CD14-positive monocyte (primary cell): ENCODE measurements at regions of chr17 and their contacts with region 1.

Region 1: GRCh38 chr17:8409966-8410864 is 12.6 kb upstream of the RNF222 start:
- DNase-seq: peak; percentile 73 to 86 (median 83)
- H3K4me3 ChIP-seq: peak overlapping the region in 1 of 3 experiments; percentile 27
- H3K4me3 Mint-ChIP-seq: peak overlapping the region; percentile 69 to 71
- H3K27ac ChIP-seq: peak overlapping the region in 1 of 2 donors; percentile 4
- H3K27ac Mint-ChIP-seq: peak overlapping the region; percentile 58 to 91 (median 80)
- H3K4me1 ChIP-seq: peaks cover 34 to 52% of the 10 kb centered on the region in 2 donors
- H3K4me1 Mint-ChIP-seq: peaks cover 46% of the 10 kb centered on the region
- H3K27me3 ChIP-seq: no peaks in the 10 kb centered on the region
- H3K27me3 Mint-ChIP-seq: peaks cover 0 to 9% (median 8%) of the 10 kb centered on the region in 3 donors
- CTCF ChIP-seq: peak; percentile 93

Region 2: DNA sequence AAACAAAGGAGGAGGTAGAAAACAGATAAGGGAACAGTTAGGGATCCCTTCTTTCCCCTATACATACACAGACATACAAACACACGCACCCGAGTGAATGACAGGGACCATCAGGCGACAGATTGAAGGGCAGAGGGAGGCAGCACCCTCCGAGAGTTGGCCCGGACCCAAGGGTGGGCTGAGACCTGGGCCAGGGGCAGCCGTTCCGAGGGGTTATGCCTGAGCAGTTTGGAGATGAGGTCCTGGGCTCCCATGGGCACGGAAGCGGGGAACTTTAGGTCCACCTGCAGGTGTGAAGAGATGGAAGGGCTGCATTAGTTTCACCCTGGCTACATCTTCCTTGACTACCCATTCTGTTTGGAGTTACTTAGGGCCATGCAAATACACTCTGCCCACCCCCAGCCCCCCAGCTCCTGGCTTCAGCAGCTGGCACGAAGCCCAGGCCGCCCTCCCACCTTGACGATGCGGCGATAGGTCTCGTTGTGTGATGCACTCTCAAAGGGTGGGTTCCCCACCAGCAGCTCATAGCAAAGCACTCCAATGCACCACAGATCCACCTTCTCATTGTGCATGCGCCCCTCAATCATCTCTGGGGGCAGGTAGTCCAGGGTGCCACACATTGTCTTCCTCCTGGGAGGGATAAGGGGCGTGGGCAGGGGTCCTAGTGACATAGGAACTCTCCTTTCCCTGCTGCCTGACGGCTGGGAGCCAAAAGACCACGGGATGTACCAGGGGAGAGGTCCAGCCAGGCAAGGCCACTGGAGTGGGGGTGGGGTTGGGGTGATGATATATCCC is 205.3 kb before region 1 on chr17:
- intact Hi-C with region 1: no loop called
- DNase-seq: no peak
- H3K4me3 ChIP-seq: no peak overlapping the region
- H3K4me3 Mint-ChIP-seq: no peak overlapping the region
- H3K27ac ChIP-seq: no peak overlapping the region
- H3K27ac Mint-ChIP-seq: peak overlapping the region in 1 of 7 donors; percentile 70
- H3K4me1 ChIP-seq: peaks cover 18 to 22% of the 10 kb centered on the region in 2 donors
- H3K4me1 Mint-ChIP-seq: peaks cover 18% of the 10 kb centered on the region
- H3K27me3 ChIP-seq: no peaks in the 10 kb centered on the region
- H3K27me3 Mint-ChIP-seq: no peaks in the 10 kb centered on the region
- CTCF ChIP-seq: no peak

Region 3: GRCh38 chr17:8420041-8420934 is 10.1 kb after region 1 on chr17:
- intact Hi-C with region 1: loop called in 1 of 2 experiments (anchors 1 kb)
- DNase-seq: peak; percentile 78 to 86 (median 79)
- H3K4me3 ChIP-seq: peak overlapping the region in 1 of 3 experiments; percentile 31
- H3K4me3 Mint-ChIP-seq: peak overlapping the region in 1 of 2 donors; percentile 65
- H3K27ac ChIP-seq: peak overlapping the region; percentile 81 to 94
- H3K27ac Mint-ChIP-seq: peak overlapping the region; percentile 91 to 99 (median 97)
- H3K4me1 ChIP-seq: peaks cover 57 to 76% of the 10 kb centered on the region in 2 donors
- H3K4me1 Mint-ChIP-seq: peaks cover 83% of the 10 kb centered on the region
- H3K27me3 ChIP-seq: no peaks in the 10 kb centered on the region
- H3K27me3 Mint-ChIP-seq: peaks cover 0 to 2% (median 0%) of the 10 kb centered on the region in 3 donors
- CTCF ChIP-seq: no peak

Region 4: DNA sequence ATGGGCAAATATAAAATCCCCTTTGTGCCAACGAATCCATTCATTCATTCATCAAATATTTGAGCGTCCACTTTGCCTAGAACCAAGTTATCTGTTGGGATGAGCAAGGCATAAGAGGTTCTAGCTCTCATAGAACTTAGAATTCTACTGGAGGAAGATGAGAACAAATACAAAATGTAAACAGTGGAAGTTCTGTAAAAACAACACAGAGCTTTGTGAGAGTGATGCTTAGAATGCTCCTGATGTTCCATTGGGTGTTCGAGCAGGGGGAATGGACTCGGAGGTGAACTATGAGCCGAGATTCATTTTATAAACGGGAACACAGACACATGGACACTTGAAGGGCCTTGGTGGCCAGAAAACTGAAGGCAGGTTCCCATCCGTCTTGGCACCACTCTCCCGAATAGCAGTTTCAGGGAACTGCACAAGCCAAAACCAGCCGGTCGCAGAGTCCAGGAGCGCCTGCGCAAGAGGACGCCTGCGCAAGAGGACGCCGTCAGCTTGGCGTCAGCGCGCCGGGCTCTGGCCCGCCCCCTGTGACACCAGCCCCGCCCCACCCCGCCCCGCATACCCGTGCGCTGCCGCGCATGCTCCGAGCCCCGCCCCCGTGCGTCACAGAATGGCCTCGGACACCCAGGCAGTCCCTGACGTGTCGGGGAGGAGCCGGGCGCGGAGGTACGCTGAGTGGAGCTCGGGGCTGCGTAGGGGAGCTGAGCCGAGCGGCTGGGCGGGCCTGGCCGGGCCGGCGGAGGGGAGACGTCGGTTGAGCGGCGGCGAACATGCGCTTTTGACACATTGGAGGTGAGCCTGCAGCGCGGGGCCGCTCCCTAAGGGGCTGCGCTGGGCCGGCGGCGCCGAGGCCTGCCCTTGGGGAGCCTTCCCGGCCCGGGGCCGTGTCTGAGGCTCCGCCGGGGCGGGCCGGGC is 25.3 kb after region 1 on chr17 and contains the start of gene NDEL1:
- intact Hi-C with region 1: loop called (anchors 2 to 5 kb)
- DNase-seq: peak; percentile 94 to 99 (median 98)
- H3K4me3 ChIP-seq: peak within 1 kb of the TSS; percentile 63 to 94 (median 92)
- H3K4me3 Mint-ChIP-seq: peak within 1 kb of the TSS; percentile 93 to 97
- H3K27ac ChIP-seq: peak within 1 kb of the TSS; percentile 91 to 96
- H3K27ac Mint-ChIP-seq: peak within 1 kb of the TSS; percentile 97 to 99 (median 98)
- H3K4me1 ChIP-seq: peaks cover 12 to 17% of the 10 kb centered on the region in 2 donors
- H3K4me1 Mint-ChIP-seq: peaks cover 24% of the 10 kb centered on the region
- H3K27me3 ChIP-seq: no peaks in the 10 kb centered on the region
- H3K27me3 Mint-ChIP-seq: peaks cover 0 to 4% (median 0%) of the 10 kb centered on the region in 3 donors
- CTCF ChIP-seq: no peak
- polyA plus RNA-seq, gene NDEL1: 29.8 to 58.3 (median 39.7) TPM

Region 5: GRCh38 chr17:8441690-8442089 is 31.5 kb after region 1 on chr17:
- intact Hi-C with region 1: loop called (anchors 2 to 5 kb)
- DNase-seq: no peak
- H3K4me3 ChIP-seq: no peak overlapping the region
- H3K4me3 Mint-ChIP-seq: no peak overlapping the region
- H3K27ac ChIP-seq: peak overlapping the region in 1 of 2 donors; percentile 44
- H3K27ac Mint-ChIP-seq: peak overlapping the region in 4 of 7 donors; percentile 40 to 76 (median 50)
- H3K4me1 ChIP-seq: peaks cover 6 to 18% of the 10 kb centered on the region in 2 donors
- H3K4me1 Mint-ChIP-seq: peaks cover 32% of the 10 kb centered on the region
- H3K27me3 ChIP-seq: no peaks in the 10 kb centered on the region
- H3K27me3 Mint-ChIP-seq: peaks cover 0 to 2% (median 0%) of the 10 kb centered on the region in 3 donors
- CTCF ChIP-seq: no peak

Region 6: DNA sequence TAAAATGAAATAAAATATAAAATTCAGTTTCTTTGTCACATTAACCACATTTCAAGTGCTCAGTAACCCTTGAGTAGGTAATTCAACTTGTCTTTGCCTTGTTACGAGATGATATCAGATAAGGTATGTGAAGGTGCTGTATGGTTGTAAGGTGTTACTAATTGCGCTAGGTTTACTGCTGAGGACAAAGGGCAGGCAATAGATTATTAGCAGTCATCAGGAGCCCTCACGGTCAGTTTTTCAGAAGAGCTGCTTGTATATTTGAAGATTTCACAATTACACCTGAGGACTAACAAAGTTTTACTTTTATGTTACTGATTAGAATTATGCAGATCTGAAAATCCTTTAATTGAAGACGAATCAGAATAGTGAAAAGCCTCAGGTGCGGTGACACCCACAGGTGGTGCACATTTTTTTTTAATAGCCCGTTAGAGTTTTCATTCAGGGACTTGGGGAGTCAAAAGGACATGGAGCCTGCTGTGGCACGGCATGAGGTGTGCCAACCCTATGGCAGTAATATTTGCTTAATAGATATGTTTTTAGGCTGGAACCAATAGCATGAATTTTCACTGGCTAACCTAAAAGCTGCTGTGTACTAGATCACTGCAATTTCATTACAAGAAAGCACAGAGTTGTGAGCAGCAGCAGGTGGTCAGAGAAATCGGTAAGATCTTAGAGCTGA is 41.9 kb after region 1 on chr17:
- intact Hi-C with region 1: loop called in 1 of 2 experiments (anchors 5 kb)
- DNase-seq: no peak
- H3K4me3 ChIP-seq: no peak overlapping the region
- H3K4me3 Mint-ChIP-seq: no peak overlapping the region
- H3K27ac ChIP-seq: no peak overlapping the region
- H3K27ac Mint-ChIP-seq: no peak overlapping the region
- H3K4me1 ChIP-seq: no peaks in the 10 kb centered on the region
- H3K4me1 Mint-ChIP-seq: no peaks in the 10 kb centered on the region
- H3K27me3 ChIP-seq: no peaks in the 10 kb centered on the region
- H3K27me3 Mint-ChIP-seq: no peaks in the 10 kb centered on the region
- CTCF ChIP-seq: no peak

Region 7: GRCh38 chr17:8745586-8746500 is 335.6 kb after region 1 on chr17:
- intact Hi-C with region 1: loop called in 1 of 2 experiments (anchors 2 kb)
- DNase-seq: peak; percentile 68 to 73 (median 69)
- H3K4me3 ChIP-seq: peak overlapping the region; percentile 55 to 88 (median 76)
- H3K4me3 Mint-ChIP-seq: peak overlapping the region; percentile 89 to 93
- H3K27ac ChIP-seq: peak overlapping the region; percentile 42 to 80
- H3K27ac Mint-ChIP-seq: peak overlapping the region; percentile 84 to 91 (median 88)
- H3K4me1 ChIP-seq: peaks cover 7 to 10% of the 10 kb centered on the region in 2 donors
- H3K4me1 Mint-ChIP-seq: peaks cover 15% of the 10 kb centered on the region
- H3K27me3 ChIP-seq: no peaks in the 10 kb centered on the region
- H3K27me3 Mint-ChIP-seq: peaks cover 1 to 22% (median 18%) of the 10 kb centered on the region in 3 donors
- CTCF ChIP-seq: peak; percentile 99